Activated CD8-positive, alpha-beta T cell treated with anti-CD3 and anti-CD28 coated beads, Interleukin-2, amount 10 ng/mL, durations not matched to agents 7 days and 5 days (primary cell): ENCODE measurements at regions of chr22 and their contacts with region 1.

Region 1: DNA sequence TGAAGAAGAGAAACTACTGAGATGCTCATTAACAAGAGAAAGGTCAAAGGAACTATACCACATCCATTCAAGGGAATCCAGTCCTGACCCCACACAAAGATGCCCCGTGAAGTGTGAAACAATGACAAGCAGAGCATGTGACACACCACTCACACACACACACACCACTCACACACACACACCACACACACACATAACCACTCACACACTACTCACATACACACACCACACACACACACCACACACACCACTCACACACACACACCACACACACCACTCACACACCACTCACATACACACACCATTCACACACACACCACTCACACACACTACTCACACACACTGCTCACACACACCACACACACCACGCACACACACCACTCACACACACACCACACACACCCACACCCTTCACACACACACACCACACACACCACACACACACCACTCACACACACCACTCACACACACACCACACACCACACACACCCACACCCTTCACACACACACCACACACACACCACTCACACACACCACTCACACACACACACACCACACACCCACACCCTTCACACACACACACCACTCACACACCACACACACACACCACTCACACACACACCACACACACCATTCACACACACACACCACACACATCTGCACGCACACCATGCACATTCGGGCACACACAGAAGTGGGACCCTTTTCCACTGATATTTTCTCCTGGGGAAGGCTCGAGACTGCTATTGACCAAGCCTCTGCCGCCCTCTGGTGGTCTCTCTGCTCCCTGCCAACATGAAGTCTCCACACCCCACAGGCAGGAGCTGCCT is 32.0 kb upstream of the COMT start:
- DNase-seq: peak; percentile 88
- ATAC-seq: peak; percentile 87
- H3K4me3 Mint-ChIP-seq: no peak overlapping the region
- H3K27ac Mint-ChIP-seq: peak overlapping the region; percentile 12
- H3K4me1 Mint-ChIP-seq: no peaks in the 10 kb centered on the region
- H3K27me3 Mint-ChIP-seq: no peaks in the 10 kb centered on the region

Region 2: DNA sequence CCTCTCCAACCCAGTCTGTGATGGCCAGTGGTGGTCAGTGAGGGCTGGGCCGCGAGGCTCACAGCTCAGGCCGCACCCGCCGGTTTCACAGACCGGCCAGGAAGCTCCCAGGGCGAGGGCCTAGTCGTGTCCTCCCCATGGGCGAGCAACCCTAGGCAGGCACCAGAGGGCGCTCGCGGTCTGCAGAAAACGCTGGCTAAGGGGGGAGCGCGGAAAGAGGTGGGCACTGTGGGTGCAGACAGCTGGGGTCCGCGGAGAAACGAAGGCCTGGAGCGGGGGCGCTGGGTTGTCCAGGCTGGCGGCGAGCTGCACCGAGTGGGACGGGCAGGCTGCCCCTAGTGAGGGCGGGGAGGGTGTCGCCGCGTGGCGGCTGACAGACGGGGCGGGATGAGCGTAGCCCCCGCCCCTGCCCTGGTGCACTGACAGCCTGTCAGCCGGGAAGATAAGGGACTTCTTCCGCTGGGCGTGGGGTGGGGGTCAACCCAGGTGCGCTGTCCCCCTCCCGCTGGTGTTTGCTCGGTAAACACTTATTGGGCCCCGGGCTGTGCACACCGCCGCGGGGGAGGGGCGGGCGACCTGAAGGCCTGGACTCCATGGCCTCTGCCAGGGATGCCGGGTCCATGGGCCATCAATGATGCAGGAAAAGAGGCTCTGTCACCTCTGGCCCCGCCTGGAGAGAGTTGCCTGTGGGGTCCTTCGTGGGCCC is 178.8 kb before region 1 on chr22:
- CTCF ChIA-PET with region 1: interaction called, 115 read pairs
- POLR2A ChIA-PET with region 1: interaction called, 3 read pairs
- DNase-seq: peak; percentile 89
- ATAC-seq: peak; percentile 93
- H3K4me3 Mint-ChIP-seq: peak overlapping the region; percentile 58
- H3K27ac Mint-ChIP-seq: no peak overlapping the region
- H3K4me1 Mint-ChIP-seq: peaks cover 2% of the 10 kb centered on the region
- H3K27me3 Mint-ChIP-seq: no peaks in the 10 kb centered on the region

Region 3: GRCh38 chr22:19844377-19845053 is 65.0 kb before region 1 on chr22:
- CTCF ChIA-PET with region 1: interaction called, 10 read pairs
- POLR2A ChIA-PET with region 1: interaction called, 3 read pairs
- DNase-seq: peak; percentile 46
- ATAC-seq: peak; percentile 70
- H3K4me3 Mint-ChIP-seq: peak overlapping the region; percentile 43
- H3K27ac Mint-ChIP-seq: peak overlapping the region; percentile 84
- H3K4me1 Mint-ChIP-seq: peaks cover 21% of the 10 kb centered on the region
- H3K27me3 Mint-ChIP-seq: no peaks in the 10 kb centered on the region

Region 4: GRCh38 chr22:19891317-19892256 is 18.0 kb before region 1 on chr22:
- CTCF ChIA-PET with region 1: interaction called, 17 read pairs
- POLR2A ChIA-PET with region 1: no interaction called
- DNase-seq: peak; percentile 80
- ATAC-seq: peak; percentile 89
- H3K4me3 Mint-ChIP-seq: peak overlapping the region; percentile 70
- H3K27ac Mint-ChIP-seq: peak overlapping the region; percentile 89
- H3K4me1 Mint-ChIP-seq: peaks cover 59% of the 10 kb centered on the region
- H3K27me3 Mint-ChIP-seq: no peaks in the 10 kb centered on the region

Region 5: DNA sequence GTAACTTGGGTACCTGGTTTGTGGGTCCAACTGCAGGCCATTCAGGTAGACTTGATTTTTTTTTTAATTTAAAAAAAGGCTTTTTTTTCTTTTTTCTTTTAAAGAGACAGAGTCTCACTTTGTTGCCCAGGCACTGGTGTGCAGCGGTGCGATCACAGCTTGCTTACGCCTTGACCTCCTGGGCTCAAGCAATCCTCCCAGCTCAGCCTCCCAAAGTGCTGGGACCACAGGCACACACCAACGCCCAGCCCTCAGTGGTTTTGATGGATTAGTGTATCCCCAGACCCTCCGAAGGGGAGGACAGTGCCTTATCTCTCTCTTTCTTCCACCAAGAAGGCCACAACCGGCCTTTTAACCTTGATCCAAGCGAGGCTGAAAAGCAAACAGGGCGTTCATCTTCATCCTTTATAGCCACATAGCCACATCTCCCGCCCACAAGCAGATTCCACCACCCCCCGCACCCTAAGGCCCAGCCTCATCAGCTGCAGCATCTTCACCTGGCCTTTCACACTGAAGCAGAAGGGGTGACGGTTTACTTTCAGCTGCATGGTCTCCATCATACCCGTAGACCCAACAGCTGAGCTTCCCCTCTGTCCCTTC is 14.4 kb after region 1 on chr22:
- CTCF ChIA-PET with region 1: interaction called, 11 read pairs
- POLR2A ChIA-PET with region 1: no interaction called
- DNase-seq: no peak
- ATAC-seq: no peak
- H3K4me3 Mint-ChIP-seq: no peak overlapping the region
- H3K27ac Mint-ChIP-seq: no peak overlapping the region
- H3K4me1 Mint-ChIP-seq: no peaks in the 10 kb centered on the region
- H3K27me3 Mint-ChIP-seq: no peaks in the 10 kb centered on the region